Activated naive CD4-positive, alpha-beta T cell treated with anti-CD3 and anti-CD28 coated beads for 36 hours (primary cell): ENCODE measurements at regions of chr16 and their contacts with region 1.

Region 1: GRCh38 chr16:50102051-50102746 is 36.4 kb downstream of the HEATR3 start:
- DNase-seq: peak; percentile 36
- H3K4me3 Mint-ChIP-seq: no peak overlapping the region
- H3K27ac Mint-ChIP-seq: peak overlapping the region; percentile 35
- H3K4me1 Mint-ChIP-seq: peaks cover 8% of the 10 kb centered on the region
- H3K27me3 Mint-ChIP-seq: no peaks in the 10 kb centered on the region

Region 2: DNA sequence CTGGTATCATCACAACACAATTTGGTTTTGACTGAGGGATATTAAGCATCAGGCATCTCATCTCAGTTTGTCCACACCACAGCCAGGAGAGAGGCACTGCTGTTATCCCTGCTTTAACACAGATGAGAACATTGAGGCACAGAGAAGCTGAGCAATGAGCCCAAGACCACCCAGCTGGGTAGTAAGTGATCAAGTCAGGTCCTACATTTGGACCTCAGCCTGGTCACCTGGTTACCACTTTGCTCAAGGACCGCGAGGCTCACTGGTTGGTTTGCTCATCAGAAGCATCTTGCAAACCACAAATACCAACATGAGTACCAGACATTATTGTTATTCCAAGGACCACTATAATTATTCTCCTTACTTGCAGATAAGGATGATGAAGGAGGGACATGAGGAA is 1066.1 kb before region 1 on chr16:
- CTCF ChIA-PET with region 1: no interaction called
- intact Hi-C with region 1: no loop called
- DNase-seq: no peak
- H3K4me3 Mint-ChIP-seq: no peak overlapping the region
- H3K27ac Mint-ChIP-seq: no peak overlapping the region
- H3K4me1 Mint-ChIP-seq: no peaks in the 10 kb centered on the region
- H3K27me3 Mint-ChIP-seq: no peaks in the 10 kb centered on the region

Region 3: GRCh38 chr16:50002190-50002589 is 100.0 kb before region 1 on chr16:
- CTCF ChIA-PET with region 1: no interaction called
- intact Hi-C with region 1: no loop called
- DNase-seq: no peak
- H3K4me3 Mint-ChIP-seq: no peak overlapping the region
- H3K27ac Mint-ChIP-seq: no peak overlapping the region
- H3K4me1 Mint-ChIP-seq: no peaks in the 10 kb centered on the region
- H3K27me3 Mint-ChIP-seq: peaks cover 7% of the 10 kb centered on the region

Region 4: GRCh38 chr16:50015631-50016030 is 86.6 kb before region 1 on chr16:
- CTCF ChIA-PET with region 1: no interaction called
- intact Hi-C with region 1: no loop called
- DNase-seq: no peak
- H3K4me3 Mint-ChIP-seq: no peak overlapping the region
- H3K27ac Mint-ChIP-seq: no peak overlapping the region
- H3K4me1 Mint-ChIP-seq: no peaks in the 10 kb centered on the region
- H3K27me3 Mint-ChIP-seq: no peaks in the 10 kb centered on the region

Region 5: GRCh38 chr16:50072730-50073129 is 29.5 kb before region 1 on chr16:
- CTCF ChIA-PET with region 1: no interaction called
- intact Hi-C with region 1: loop called (anchors 1 kb)
- DNase-seq: no peak
- H3K4me3 Mint-ChIP-seq: no peak overlapping the region
- H3K27ac Mint-ChIP-seq: no peak overlapping the region
- H3K4me1 Mint-ChIP-seq: peaks cover 31% of the 10 kb centered on the region
- H3K27me3 Mint-ChIP-seq: no peaks in the 10 kb centered on the region

Region 6: DNA sequence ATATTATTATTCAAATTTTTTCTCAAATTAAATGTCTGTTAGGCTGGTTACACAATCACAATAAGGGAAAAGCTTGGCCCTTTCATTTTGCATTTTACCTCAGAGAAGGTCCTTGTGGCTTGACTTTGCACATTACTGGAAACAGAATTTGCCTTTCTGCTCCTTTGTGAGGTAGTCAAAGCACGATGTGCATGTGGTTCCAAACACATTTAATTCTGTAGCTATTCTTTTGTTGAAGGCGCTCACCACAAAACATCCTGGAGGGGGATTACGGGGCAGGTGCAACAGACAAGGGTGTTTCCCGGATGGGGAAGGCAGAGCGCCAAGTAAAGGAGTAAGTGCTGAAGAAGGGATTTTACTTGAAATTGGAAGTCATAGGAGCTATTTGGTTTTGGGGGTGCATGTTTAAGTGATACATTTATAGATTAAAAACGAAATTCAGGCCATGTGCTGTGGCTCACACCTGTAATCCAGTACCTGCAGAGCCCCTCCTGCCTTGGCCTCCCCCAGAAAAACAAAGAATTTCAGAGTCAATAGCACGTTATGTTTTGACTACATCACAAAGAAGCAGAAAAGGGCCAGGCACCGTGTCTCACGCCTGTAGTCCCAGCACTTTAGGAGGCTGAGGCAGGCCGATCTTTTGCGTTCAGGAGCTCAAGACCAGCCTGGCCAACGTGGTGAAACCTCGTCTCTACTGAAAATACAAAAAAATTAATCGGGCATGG is 19.7 kb after region 1 on chr16:
- CTCF ChIA-PET with region 1: interaction called, 3 read pairs
- intact Hi-C with region 1: loop called (anchors 1 kb)
- DNase-seq: peak; percentile 93
- H3K4me3 Mint-ChIP-seq: peak overlapping the region; percentile 22
- H3K27ac Mint-ChIP-seq: peak overlapping the region; percentile 75
- H3K4me1 Mint-ChIP-seq: peaks cover 20% of the 10 kb centered on the region
- H3K27me3 Mint-ChIP-seq: no peaks in the 10 kb centered on the region

Region 7: DNA sequence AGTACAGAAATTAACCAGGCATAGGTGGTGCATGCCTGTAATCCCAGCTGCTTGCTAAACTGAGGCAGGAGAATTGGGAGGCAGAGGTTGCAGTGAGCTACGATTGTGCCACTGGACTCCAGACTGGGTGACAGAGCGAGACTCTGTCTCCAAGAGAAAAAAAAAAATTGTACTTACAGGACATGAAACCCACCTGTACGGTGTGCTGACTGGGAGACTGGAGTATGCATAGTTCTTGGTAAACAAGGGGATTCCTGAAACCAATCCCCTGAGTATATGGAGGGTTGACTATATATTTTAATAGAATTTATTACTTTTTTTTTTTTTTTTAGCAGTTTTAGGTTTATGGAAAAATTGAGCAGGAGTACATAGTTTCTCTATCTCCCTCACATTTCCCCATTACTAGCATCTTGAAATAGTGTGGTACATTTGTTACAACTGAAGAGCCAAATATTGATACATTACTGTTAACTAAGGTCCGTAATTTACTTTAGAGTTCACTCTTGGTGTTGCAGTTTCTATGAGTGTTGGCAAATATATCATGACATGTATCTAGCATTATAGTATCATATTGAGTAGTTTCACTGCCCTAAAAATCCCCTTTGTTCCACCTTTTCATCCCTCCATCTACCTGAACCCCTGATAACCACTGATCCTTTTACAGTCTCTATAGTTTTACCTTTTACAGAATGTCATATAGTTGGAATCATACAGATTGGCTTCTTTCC is 70.2 kb after region 1 on chr16:
- CTCF ChIA-PET with region 1: no interaction called
- intact Hi-C with region 1: loop called (anchors 2 kb)
- DNase-seq: no peak
- H3K4me3 Mint-ChIP-seq: no peak overlapping the region
- H3K27ac Mint-ChIP-seq: peak overlapping the region; percentile 71
- H3K4me1 Mint-ChIP-seq: peaks cover 74% of the 10 kb centered on the region
- H3K27me3 Mint-ChIP-seq: no peaks in the 10 kb centered on the region